Activated T-helper 1 cell treated with anti-CD3 and anti-CD28 coated beads, Interleukin-12 subunit alpha, Interleukin-12 subunit beta, Interleukin-2, Interleukin-4 antibody, amounts not matched to agents 30 ng/mL and 10 ng/mL and 1 ng/mL, durations not matched to agents 14 hours and 24 hours and 36 hours (primary cell): ENCODE measurements at regions of chr15 and their contacts with region 1.

Region 1: DNA sequence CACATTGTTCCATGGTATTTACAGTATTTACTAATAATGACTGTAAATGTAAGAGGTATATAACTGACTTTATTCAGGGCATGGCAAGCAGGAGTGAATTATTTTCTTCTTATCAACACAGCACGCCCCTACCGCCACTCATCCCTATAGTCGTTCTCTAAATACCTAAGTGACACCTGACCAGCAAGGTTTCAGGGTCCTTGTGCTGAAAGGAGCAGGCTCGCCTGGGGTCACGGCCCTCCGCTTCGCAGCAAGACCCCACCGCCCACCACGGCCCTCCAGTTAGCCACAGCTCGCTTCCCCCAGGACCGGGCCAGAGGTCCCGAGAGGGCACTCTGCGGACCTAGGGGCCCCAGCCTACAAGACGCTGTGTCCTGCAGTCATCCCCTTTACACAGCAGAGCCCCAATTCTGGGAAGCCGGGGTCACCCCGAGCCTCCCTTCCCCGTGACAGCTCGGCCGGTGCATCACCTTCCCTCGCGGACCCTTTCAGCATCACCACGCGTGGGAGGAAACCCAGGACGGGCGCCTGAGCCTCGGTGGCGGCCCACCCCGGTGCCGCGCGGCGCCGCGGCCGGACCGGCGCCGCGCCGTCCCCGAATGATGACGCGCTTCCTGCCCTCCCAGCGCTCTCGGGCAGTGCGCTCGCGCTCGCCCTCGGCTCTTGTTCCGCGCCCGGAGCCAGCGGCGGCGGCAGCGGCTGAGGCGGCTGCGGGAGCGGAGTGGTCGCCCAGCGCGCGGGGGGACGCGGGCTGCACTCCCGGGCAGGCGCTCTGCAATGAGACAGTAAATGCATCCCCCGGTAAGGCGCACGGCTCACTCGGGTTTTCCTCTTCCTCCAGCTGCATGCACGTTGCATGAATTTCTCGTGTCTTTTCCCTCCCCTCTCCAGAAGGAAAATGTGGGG is 225.1 kb upstream of the C2CD4B start:
- DNase-seq: peak; percentile 65
- H3K4me3 Mint-ChIP-seq: peak within 1 kb of the TSS; percentile 95
- H3K27ac Mint-ChIP-seq: peak within 1 kb of the TSS; percentile 87
- H3K4me1 Mint-ChIP-seq: peaks cover 16% of the 10 kb centered on the region
- H3K27me3 Mint-ChIP-seq: peaks cover 31% of the 10 kb centered on the region

Region 2: DNA sequence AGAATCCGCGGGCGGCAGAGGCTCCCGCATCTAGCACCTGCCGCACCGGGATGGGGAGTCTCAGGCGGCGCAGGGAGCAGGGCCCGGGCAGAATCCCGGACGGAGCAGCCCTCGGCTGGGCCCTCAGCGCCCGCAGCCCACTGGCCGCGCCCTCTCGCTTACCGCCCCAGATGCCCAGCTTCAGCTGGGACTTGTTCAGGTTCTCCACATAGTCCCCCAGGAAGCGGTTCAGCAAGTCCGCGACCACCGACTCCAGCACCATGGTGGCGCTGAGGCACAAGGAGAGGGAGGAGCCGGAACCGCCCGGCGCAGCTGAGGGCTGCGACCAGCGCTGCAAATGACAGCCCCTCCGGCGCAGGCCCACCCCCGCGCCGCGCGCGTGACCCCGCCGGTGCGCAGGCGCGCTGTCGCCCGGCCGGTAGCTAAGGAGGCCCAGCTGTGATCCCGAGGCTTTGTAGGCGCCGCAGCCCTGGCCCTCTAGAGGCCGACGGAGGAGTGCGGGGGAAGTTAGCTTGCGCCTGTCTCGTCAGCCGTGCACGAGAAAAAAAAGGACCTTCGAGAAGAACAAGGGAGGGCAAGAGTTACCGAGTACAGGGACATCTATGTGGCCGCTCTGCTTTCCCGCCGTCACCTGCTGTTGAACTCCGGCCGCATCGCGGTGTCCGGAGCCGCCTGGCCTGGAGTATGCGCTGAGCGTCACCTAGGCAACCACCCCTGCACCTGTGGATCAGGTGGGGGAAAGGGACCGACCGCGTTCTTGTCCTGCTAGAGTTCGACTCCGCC is 329.8 kb before region 1 on chr15 and contains the start of gene VPS13C:
- intact Hi-C with region 1: loop called (anchors 2 kb)
- DNase-seq: peak; percentile 93
- H3K4me3 Mint-ChIP-seq: peak within 1 kb of the TSS; percentile 98
- H3K27ac Mint-ChIP-seq: peak within 1 kb of the TSS; percentile 100
- H3K4me1 Mint-ChIP-seq: peaks cover 47% of the 10 kb centered on the region
- H3K27me3 Mint-ChIP-seq: peaks cover 10% of the 10 kb centered on the region
- total RNA-seq, gene VPS13C: 50.4 and 52.7 TPM in 2 replicates

Region 3: DNA sequence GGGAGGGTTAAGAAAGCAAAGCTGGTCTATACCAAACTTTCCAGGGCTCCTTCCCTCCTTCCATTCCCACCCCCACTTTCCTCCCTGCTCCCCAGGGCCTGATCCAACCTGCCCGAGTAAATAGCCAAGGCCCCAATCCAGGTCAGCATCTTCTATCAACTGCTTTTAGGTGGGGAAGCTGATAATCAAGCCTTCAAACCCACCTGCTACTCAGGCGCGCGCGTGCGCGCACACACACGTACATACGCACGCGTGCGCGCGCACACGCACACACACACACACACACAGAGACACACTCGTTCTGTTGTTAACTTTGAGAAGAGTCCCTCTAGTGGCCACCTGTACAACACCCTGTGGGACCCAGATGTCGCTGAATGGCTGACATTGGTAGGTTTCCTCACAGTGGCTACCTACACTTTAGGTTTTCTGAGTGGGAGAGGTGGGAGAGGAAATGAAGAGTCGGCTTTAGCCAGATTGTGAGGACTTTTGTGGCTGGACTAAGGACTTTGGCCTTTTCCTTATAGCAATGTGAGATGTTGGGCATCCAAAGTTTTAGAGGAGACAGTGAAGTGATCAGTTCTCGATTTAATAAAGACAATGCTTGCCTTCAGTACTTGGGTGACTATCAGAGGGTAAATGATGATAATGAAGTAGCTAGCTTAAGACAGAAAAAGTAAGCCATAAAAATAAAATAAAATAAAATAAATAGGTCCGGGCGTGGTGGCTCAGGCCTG is 45.2 kb before region 1 on chr15:
- intact Hi-C with region 1: loop called (anchors 1 kb)
- DNase-seq: peak; percentile 24
- H3K4me3 Mint-ChIP-seq: peak overlapping the region; percentile 73
- H3K27ac Mint-ChIP-seq: no peak overlapping the region
- H3K4me1 Mint-ChIP-seq: peaks cover 7% of the 10 kb centered on the region
- H3K27me3 Mint-ChIP-seq: no peaks in the 10 kb centered on the region

Region 4: DNA sequence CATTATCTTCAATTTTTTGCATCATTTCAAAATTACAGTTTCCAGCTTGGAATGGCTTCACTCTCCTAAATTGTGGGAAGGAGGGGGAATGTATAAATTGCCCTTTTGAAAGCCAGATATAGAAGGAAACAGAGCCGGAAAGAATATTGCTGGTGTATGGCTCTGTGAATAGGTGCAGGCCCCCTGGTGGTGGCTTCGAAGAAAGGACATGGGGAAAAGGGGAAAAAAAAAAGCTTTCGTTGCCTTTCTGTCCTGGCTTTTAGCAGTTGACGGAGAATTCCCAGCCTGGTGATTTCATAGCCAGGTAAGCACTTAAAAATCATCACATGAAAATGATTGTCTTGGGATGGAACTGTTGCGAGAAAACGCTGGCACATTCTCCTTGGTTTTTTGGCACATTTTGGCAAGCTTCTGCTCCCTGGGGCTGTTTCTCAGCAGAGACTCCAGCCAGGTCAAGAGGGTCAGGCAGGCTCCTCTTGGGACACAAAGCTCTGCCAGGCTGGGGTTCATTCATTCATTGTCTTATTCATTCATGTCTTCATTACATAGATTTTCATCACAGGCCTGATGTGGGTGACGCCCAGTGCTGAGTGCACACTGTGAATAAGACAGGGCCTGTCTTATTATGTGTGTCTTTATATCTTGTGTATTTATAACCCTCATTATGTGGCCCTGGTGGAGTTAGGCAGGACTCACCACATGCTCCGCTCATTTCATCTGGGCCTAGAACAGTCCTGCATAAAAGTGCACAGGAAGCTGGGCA is 352.5 kb after region 1 on chr15:
- intact Hi-C with region 1: loop called (anchors 2 kb)
- DNase-seq: no peak
- H3K4me3 Mint-ChIP-seq: no peak overlapping the region
- H3K27ac Mint-ChIP-seq: no peak overlapping the region
- H3K4me1 Mint-ChIP-seq: no peaks in the 10 kb centered on the region
- H3K27me3 Mint-ChIP-seq: no peaks in the 10 kb centered on the region